ENCODE measurements at regions of chr21 and their contacts with region 1.

Region 1: DNA sequence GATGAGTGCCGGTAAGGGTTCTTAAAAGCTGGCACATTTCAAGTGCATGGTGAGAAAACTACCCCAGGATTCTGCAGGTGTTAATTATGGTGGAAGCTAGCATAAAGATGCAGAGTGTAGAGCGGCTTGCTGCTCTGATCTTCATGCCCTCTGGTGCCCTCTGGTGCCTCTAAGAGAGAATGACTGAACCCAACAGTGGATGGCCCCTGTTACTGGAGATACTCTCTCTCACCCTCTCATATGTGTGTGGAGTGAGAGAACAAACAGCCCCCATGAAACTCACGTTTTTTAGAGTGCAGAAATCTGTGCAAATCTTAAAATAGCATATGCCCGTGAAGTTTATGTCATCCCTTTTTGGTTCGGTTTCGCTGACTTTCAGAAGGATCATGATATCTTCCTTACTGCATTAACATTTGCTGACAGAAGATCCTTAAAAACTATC is 90.0 kb downstream of the GRIK1 start:
- DNase-seq: peak in 4 of 5 donors; percentile 61 to 81 (median 68)
- H3K4me3 ChIP-seq: no peak overlapping the region
- H3K27ac ChIP-seq: no peak overlapping the region
- H3K4me1 ChIP-seq: no peaks in the 10 kb centered on the region
- H3K27me3 ChIP-seq: no peaks in the 10 kb centered on the region
- CTCF ChIP-seq: peak; percentile 72

Region 2: GRCh38 chr21:29477941-29478340 is 371.8 kb before region 1 on chr21:
- intact Hi-C with region 1: loop called (anchors 10 kb)
- DNase-seq: no peak
- H3K4me3 ChIP-seq: no peak overlapping the region
- H3K27ac ChIP-seq: no peak overlapping the region
- H3K4me1 ChIP-seq: peaks cover 0 to 2% (median 0%) of the 10 kb centered on the region in 3 donors
- H3K27me3 ChIP-seq: no peaks in the 10 kb centered on the region
- CTCF ChIP-seq: no peak

Measured in kidney (tissue), 22 donors.